ENCODE measurements at regions of chr16 and their contacts with region 1.

Region 1: DNA sequence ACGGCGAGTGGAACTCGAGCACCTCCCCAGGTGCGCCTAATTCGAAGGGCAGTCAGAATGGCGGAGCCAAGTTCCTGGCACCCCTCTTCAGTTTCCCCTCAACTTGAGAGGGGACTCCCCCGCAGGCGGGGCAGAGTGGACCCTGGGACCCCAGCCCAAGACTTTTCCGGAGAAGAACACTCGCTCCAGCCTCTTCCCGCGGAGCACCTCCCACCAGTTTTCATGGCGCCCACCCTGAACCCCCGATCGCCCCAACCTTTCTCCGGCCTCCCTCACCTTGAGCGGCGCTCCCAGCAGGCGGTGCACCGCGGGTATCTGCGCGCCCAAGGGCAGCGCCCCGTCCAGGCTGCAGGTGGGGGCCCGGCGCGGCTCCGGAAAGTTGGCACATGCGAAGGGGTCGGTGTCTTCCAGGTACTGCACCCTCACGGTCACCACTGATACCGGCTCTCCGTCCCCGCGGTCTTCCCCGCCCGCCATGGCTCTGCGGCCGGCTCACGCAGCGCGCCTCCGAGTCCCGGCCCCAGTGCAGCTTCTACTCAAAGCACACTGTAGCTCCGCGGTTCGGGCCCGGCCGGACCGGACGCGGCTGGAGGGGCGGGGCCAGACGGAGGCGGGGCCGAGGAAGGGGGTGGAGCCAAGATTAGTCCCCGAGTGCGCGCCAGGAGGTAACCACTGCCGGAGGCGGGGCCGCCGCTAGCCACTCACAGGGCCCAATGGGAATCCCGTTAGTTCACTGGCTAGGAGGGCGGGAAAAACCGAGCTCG is at the start of gene FHOD1:
- DNase-seq: peak; percentile 88 to 100 (median 91)
- ATAC-seq: peak; percentile 85
- H3K4me3 ChIP-seq: peak within 1 kb of the TSS; percentile 68
- H3K4me3 Mint-ChIP-seq: peak within 1 kb of the TSS; percentile 83 to 96 (median 91)
- H3K27ac ChIP-seq: peak within 1 kb of the TSS; percentile 60
- H3K27ac Mint-ChIP-seq: peak within 1 kb of the TSS; percentile 70 to 92 (median 80)
- H3K4me1 ChIP-seq: peaks cover 31 to 39% of the 10 kb centered on the region in 2 donors
- H3K4me1 Mint-ChIP-seq: peaks cover 37 to 51% (median 45%) of the 10 kb centered on the region in 7 donors
- H3K27me3 ChIP-seq: no peaks in the 10 kb centered on the region
- H3K27me3 Mint-ChIP-seq: peaks cover 0 to 20% (median 0%) of the 10 kb centered on the region in 5 donors
- total RNA-seq, gene FHOD1: 23.7 to 81.7 (median 35.1) TPM

Region 2: DNA sequence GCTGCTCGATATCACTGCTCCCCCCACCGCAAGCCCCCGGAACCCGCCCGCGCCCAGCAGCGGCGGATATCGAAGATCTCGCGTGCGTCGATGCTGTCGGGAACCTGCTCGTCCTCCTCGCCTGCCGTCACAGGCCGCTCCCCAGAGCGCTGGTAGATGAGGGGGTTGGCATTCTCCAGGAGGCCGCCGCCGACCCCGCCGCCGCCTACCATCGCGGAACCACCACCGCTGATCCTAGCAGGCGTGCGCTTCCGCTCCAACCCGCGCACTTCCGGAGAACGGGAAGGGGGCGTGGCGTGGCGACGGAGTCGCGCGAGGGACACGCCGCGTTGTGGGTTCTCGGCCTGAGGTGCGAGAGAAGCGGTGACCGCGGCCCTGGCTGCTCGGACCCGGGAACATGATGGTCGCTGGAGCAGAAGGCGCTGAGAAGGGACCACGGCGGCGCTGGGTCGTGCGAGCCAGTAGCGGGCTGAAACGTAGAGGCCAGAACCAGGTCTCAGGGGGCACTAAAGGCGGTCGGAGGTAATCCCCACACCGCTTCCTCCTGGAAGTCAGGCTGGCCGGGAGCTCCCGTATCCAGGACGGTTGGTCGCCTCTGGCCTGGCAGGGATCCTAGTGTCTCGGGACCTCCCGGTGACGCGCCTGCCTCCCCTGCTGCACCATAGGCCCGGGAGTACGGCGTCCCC is 312.8 kb before region 1 on chr16 and contains the start of gene CIAO2B:
- CTCF ChIA-PET with region 1: no interaction called
- POLR2A ChIA-PET with region 1: no interaction called
- intact Hi-C with region 1: loop called in 1 of 2 experiments (anchors 1 kb)
- DNase-seq: peak; percentile 86 to 95 (median 91)
- ATAC-seq: peak; percentile 93
- H3K4me3 ChIP-seq: peak within 1 kb of the TSS; percentile 96
- H3K4me3 Mint-ChIP-seq: peak within 1 kb of the TSS; percentile 91 to 99 (median 98)
- H3K27ac ChIP-seq: peak within 1 kb of the TSS; percentile 97
- H3K27ac Mint-ChIP-seq: peak within 1 kb of the TSS; percentile 96 to 99 (median 98)
- H3K4me1 ChIP-seq: peaks cover 24 to 35% of the 10 kb centered on the region in 2 donors
- H3K4me1 Mint-ChIP-seq: peaks cover 38 to 63% (median 54%) of the 10 kb centered on the region in 7 donors
- H3K27me3 ChIP-seq: no peaks in the 10 kb centered on the region
- H3K27me3 Mint-ChIP-seq: no peaks in the 10 kb centered on the region
- total RNA-seq, gene CIAO2B: 47.0 to 116 (median 58.5) TPM

Region 3: GRCh38 chr16:67159593-67160406 is 87.3 kb before region 1 on chr16 and contains the starts of genes FBXL8 and TRADD:
- CTCF ChIA-PET with region 1: no interaction called
- POLR2A ChIA-PET with region 1: interaction called, 6 read pairs
- intact Hi-C with region 1: loop called in 1 of 2 experiments (anchors 1 kb)
- DNase-seq: peak; percentile 73 to 91 (median 82)
- ATAC-seq: peak; percentile 78
- H3K4me3 ChIP-seq: peak within 1 kb of the TSS; percentile 78
- H3K4me3 Mint-ChIP-seq: peak within 1 kb of the TSS; percentile 76 to 93 (median 87)
- H3K27ac ChIP-seq: peak within 1 kb of the TSS; percentile 94
- H3K27ac Mint-ChIP-seq: peak within 1 kb of the TSS; percentile 94 to 99 (median 95)
- H3K4me1 ChIP-seq: peaks cover 49 to 59% of the 10 kb centered on the region in 2 donors
- H3K4me1 Mint-ChIP-seq: peaks cover 25 to 66% (median 51%) of the 10 kb centered on the region in 7 donors
- H3K27me3 ChIP-seq: peaks cover 1 to 19% of the 10 kb centered on the region in 2 donors
- H3K27me3 Mint-ChIP-seq: peaks cover 5 to 12% (median 10%) of the 10 kb centered on the region in 5 donors
- total RNA-seq, gene FBXL8: 8.7 to 84.7 (median 9.7) TPM
- total RNA-seq, gene TRADD: 47.0 to 92.8 (median 52.8) TPM

Region 4: DNA sequence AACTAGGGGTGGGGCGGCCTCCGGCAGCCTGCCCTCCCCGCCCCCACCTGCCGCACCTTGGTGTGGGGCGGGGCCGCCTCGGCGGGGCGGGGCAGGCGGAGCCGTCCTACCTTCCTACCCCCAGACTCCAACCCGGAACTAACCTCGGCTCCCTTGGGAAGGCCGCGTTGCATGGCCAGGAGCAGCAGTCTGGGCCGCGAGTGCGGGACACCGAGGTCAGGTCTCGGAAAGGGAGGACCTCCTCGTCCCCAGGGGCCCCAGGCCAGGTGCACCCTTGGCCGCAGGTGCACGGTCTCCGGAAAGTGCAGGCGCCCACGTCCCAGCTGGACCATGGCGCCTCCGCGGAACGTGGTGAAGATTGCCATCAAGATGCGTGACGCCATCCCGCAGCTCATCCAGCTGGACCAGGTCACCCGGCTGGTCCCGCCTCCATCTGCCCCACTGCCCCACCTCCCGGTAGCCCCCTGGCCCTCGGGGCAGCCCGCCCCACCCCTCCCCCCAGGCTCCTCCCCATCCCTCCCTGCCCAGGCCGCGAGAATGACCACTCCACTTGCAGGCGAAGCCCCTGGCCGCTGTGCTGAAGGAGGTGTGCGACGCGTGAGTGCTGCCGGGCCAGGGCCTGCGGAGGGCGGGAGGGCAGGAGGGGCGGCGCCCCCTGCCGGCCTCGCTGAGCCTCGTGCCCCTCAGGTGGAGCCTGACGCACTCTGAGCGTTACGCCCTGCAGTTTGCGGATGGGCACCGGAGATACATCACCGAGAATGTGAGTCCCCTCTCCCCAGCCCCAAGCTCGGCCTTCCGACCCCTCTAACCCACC is 47.9 kb before region 1 on chr16 and contains the start of gene ELMO3:
- CTCF ChIA-PET with region 1: no interaction called
- POLR2A ChIA-PET with region 1: no interaction called
- intact Hi-C with region 1: no loop called
- DNase-seq: no peak
- ATAC-seq: peak; percentile 14
- H3K4me3 ChIP-seq: no peak within 1 kb of the TSS
- H3K4me3 Mint-ChIP-seq: peak within 1 kb of the TSS in 2 of 10 donors; percentile 32 to 58
- H3K27ac ChIP-seq: no peak within 1 kb of the TSS
- H3K27ac Mint-ChIP-seq: peak within 1 kb of the TSS in 3 of 9 donors; percentile 12 to 37 (median 12)
- H3K4me1 ChIP-seq: peaks cover 0 to 1% of the 10 kb centered on the region in 2 donors
- H3K4me1 Mint-ChIP-seq: peaks cover 15 to 27% (median 18%) of the 10 kb centered on the region in 7 donors
- H3K27me3 ChIP-seq: no peaks in the 10 kb centered on the region
- H3K27me3 Mint-ChIP-seq: no peaks in the 10 kb centered on the region
- total RNA-seq, gene ELMO3: 2.6 to 9.1 (median 7.5) TPM

Region 5: DNA sequence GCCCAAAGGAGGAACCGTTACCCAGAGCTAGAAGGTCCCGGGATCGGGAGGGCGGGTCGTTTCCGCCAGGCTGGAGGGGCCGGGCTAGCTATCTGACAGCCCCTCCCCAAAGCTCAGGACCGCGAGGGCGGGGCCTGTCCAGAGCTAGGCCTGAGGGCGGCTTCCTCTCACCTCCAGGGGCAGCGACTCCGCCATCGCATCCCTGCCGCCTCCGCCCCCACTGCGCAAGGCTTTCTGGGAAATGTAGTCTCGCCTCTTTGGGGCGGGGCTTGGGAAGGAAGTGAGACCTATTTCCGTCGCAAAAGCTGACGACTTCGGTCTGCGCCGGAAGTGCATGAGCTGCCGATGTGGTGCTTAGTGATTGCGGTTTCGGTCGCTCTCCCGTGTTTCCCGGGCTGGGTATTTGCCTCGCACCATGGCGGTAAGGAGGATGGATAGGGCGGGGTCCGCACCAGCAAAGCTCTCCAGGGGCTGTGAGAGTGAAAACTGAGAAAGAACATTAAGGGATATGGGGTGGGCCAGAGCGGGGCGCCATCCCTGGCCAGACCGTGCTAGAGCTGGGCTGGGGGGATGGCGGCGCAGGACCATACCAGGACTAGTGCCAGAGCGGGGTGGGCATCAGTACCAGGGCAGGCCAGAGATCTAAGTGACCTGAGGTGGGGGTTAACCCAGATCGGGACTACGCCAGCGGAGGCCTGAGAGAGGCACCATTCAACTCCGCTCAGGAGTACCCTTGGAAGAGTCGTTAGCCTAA is 20.1 kb before region 1 on chr16 and contains the start of gene TMEM208:
- CTCF ChIA-PET with region 1: interaction called, 4 read pairs
- POLR2A ChIA-PET with region 1: interaction called, 20 read pairs
- intact Hi-C with region 1: loop called (anchors 1 kb)
- DNase-seq: peak; percentile 94 to 99 (median 97)
- ATAC-seq: peak; percentile 99
- H3K4me3 ChIP-seq: peak within 1 kb of the TSS; percentile 90
- H3K4me3 Mint-ChIP-seq: peak within 1 kb of the TSS; percentile 94 to 100 (median 98)
- H3K27ac ChIP-seq: peak within 1 kb of the TSS; percentile 85
- H3K27ac Mint-ChIP-seq: peak within 1 kb of the TSS; percentile 93 to 100 (median 99)
- H3K4me1 ChIP-seq: peaks cover 14 to 38% of the 10 kb centered on the region in 2 donors
- H3K4me1 Mint-ChIP-seq: peaks cover 37 to 62% (median 50%) of the 10 kb centered on the region in 7 donors
- H3K27me3 ChIP-seq: no peaks in the 10 kb centered on the region
- H3K27me3 Mint-ChIP-seq: no peaks in the 10 kb centered on the region
- total RNA-seq, gene TMEM208: 27.6 to 44.8 (median 32.7) TPM

Region 6: DNA sequence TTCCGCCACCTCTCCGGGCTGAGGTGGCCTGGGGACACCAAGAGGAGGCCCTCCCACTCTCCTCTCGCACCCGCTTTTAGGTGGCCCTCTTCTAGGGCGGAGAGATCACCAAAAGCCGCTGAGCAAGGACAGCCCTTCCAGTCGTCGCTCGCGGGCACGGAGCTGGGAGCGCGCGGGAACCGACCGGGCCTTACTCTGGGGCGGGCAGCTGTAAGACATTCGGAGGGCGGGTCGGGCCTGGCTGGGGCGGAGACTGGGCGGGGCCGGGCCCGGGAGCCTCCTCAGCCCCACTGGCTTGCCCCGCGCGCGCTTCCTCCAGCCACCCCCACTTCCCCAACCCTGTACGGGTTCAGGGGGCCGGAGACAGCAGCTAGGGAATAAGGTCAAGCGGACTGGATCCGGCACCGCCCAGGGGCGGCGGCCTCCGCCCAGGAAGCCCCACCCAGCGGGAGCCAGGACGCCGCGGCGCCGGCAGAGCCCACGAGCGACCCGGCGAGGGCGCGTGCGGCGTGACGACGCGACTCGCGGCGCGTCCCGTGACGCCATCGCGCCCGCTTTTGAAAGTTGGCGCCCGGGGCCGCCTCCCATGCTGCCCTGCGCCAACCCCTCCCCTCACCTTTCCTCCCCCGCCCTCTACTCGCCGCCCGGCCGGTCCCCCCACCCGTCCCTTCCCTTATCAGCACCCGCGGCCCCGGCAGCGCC is 314.9 kb after region 1 on chr16:
- CTCF ChIA-PET with region 1: no interaction called
- POLR2A ChIA-PET with region 1: no interaction called
- intact Hi-C with region 1: loop called in 1 of 2 experiments (anchors 1 kb)
- DNase-seq: peak; percentile 93 to 98 (median 96)
- ATAC-seq: peak; percentile 86
- H3K4me3 ChIP-seq: peak overlapping the region; percentile 72
- H3K4me3 Mint-ChIP-seq: peak overlapping the region; percentile 85 to 93 (median 90)
- H3K27ac ChIP-seq: peak overlapping the region; percentile 98
- H3K27ac Mint-ChIP-seq: peak overlapping the region; percentile 90 to 99 (median 96)
- H3K4me1 ChIP-seq: peaks cover 30 to 36% of the 10 kb centered on the region in 2 donors
- H3K4me1 Mint-ChIP-seq: peaks cover 28 to 64% (median 46%) of the 10 kb centered on the region in 7 donors
- H3K27me3 ChIP-seq: no peaks in the 10 kb centered on the region
- H3K27me3 Mint-ChIP-seq: no peaks in the 10 kb centered on the region

Region 7: DNA sequence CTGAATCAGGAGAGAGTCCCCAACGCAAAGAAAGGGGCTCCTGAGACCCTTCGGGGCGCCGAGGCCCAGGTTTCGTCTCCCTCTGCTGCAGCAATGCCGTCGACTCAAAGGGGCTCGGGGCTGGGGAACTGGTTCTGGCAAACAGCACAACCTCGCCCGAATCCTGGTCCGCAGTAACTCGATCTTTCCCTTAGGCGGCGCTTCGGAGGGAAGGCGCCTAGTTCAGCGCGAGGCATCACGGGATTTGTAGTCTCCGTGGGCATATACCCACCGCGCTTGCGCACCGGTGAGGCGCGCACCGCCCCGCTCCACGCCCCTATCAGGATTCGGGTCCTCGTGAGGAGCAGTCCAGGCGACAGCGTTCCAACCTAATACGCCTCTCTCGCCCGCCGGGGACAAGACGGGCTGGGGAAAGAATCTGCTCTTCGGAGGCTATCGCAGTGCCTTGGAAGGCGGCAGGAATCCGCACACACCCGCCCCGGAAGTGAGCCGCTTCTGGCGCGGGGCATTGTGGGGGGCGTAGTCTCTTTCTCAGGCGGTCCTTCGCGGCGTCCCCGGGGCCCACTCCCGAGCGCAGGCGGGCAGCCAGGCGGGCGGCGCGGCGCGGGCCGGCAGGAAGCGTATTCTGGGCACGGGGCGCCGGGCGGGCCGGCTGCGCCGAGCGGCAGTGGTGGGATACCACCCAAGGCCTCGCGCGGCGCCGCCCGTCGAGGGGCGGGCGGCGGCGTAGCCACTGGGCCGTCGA is 594.8 kb after region 1 on chr16 and contains the start of gene THAP11:
- CTCF ChIA-PET with region 1: no interaction called
- POLR2A ChIA-PET with region 1: no interaction called
- intact Hi-C with region 1: loop called in 1 of 2 experiments (anchors 10 kb)
- DNase-seq: peak; percentile 91 to 99 (median 96)
- ATAC-seq: peak; percentile 76
- H3K4me3 ChIP-seq: peak within 1 kb of the TSS; percentile 100
- H3K4me3 Mint-ChIP-seq: peak within 1 kb of the TSS; percentile 94 to 97 (median 96)
- H3K27ac ChIP-seq: peak within 1 kb of the TSS; percentile 99
- H3K27ac Mint-ChIP-seq: peak within 1 kb of the TSS; percentile 94 to 98 (median 97)
- H3K4me1 ChIP-seq: peaks cover 34 to 36% of the 10 kb centered on the region in 2 donors
- H3K4me1 Mint-ChIP-seq: peaks cover 18 to 41% (median 36%) of the 10 kb centered on the region in 7 donors
- H3K27me3 ChIP-seq: no peaks in the 10 kb centered on the region
- H3K27me3 Mint-ChIP-seq: no peaks in the 10 kb centered on the region
- total RNA-seq, gene THAP11: 29.0 to 62.7 (median 44.6) TPM

Measured in naive thymus-derived CD4-positive, alpha-beta T cell (primary cell).